Kidney (tissue), 22 donors: ENCODE measurements at regions of chr4 and their contacts with region 1.

Region 1: DNA sequence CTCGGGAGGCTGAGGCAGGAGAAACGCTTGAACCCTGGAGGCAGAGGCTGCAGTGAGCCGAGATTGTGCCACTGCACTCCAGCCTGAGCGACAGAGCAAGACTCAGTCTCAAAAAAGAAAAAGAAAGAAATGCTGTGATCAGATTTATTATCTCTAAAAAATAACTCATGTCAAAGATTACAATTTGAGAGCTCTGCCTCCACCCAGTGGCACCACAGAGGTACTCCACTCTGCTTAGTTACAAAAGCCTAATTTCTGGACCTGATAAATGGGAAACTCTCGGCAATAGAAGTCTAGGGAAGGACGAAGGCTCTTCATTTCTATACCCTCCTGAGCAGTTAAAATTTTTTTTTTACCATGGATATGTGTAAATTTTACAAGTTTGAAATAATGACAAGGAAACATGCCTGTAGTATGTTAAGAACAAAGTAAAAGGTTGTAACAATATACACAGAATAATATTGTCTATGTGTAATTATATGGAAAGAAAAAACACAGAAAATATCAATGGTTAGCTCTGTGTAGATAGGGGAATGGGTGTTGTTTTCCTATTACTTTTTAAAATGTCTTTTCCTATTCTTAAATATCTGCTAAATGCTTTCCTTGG is 149.8 kb downstream of the STIM2 start:
- DNase-seq: peak; percentile 47 to 68 (median 62)
- H3K4me3 ChIP-seq: no peak overlapping the region
- H3K27ac ChIP-seq: no peak overlapping the region
- H3K4me1 ChIP-seq: no peaks in the 10 kb centered on the region
- H3K27me3 ChIP-seq: no peaks in the 10 kb centered on the region
- CTCF ChIP-seq: peak; percentile 89

Region 2: GRCh38 chr4:26459756-26460530 is 550.5 kb before region 1 on chr4:
- intact Hi-C with region 1: loop called (anchors 10 kb)
- DNase-seq: no peak
- H3K4me3 ChIP-seq: no peak overlapping the region
- H3K27ac ChIP-seq: no peak overlapping the region
- H3K4me1 ChIP-seq: no peaks in the 10 kb centered on the region
- H3K27me3 ChIP-seq: no peaks in the 10 kb centered on the region
- CTCF ChIP-seq: no peak

Region 3: GRCh38 chr4:26916195-26916594 is 94.2 kb before region 1 on chr4:
- intact Hi-C with region 1: no loop called
- DNase-seq: no peak
- H3K4me3 ChIP-seq: no peak overlapping the region
- H3K27ac ChIP-seq: no peak overlapping the region
- H3K4me1 ChIP-seq: peaks cover 0 to 2% (median 0%) of the 10 kb centered on the region in 3 donors
- H3K27me3 ChIP-seq: no peaks in the 10 kb centered on the region
- CTCF ChIP-seq: no peak

Region 4: DNA sequence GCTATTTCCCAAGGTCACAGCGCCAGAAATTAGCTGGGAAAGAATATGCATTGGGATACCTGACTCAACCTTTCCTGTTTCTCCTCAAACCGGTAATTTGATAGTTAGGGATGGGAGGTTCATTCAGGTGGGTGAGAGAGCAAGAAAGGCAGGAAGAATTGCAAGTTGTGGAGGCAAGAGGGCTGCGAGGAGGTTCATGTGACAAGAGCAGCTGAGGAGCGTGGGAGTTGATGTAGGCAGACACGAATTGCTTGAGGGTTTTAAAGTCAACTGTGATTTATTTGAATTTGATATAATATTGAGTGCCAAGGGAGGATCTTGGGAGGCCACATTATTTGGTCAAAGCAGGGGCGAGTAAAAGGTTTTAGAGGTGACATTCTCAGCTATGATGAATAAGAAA is 179.2 kb after region 1 on chr4:
- intact Hi-C with region 1: no loop called
- DNase-seq: peak in 3 of 5 donors; percentile 15 to 25 (median 23)
- H3K4me3 ChIP-seq: no peak overlapping the region
- H3K27ac ChIP-seq: no peak overlapping the region
- H3K4me1 ChIP-seq: no peaks in the 10 kb centered on the region
- H3K27me3 ChIP-seq: no peaks in the 10 kb centered on the region
- CTCF ChIP-seq: no peak